ENCODE measurements at regions of chr1 and their contacts with region 1.

Region 1: GRCh38 chr1:6393400-6394187 is at the start of gene ACOT7:
- DNase-seq: peak; percentile 87 to 94
- ATAC-seq: peak; percentile 88 to 97 (median 90)
- H3K4me3 ChIP-seq: peak within 1 kb of the TSS; percentile 55
- H3K4me3 Mint-ChIP-seq: peak within 1 kb of the TSS; percentile 89
- H3K27ac ChIP-seq: peak within 1 kb of the TSS; percentile 90
- H3K27ac Mint-ChIP-seq: peak within 1 kb of the TSS; percentile 88
- H3K4me1 ChIP-seq: peaks cover 24% of the 10 kb centered on the region
- H3K4me1 Mint-ChIP-seq: peaks cover 21 to 23% of the 10 kb centered on the region in 2 donors
- H3K27me3 ChIP-seq: no peaks in the 10 kb centered on the region
- H3K27me3 Mint-ChIP-seq: no peaks in the 10 kb centered on the region
- CTCF ChIP-seq: no peak
- total RNA-seq, gene ACOT7: 11.5 to 16.9 (median 15.4) TPM

Region 2: GRCh38 chr1:6365047-6365446 is 28.5 kb before region 1 on chr1:
- intact Hi-C with region 1: loop called (anchors 2 kb)
- DNase-seq: peak in 1 of 2 donors; percentile 82
- ATAC-seq: peak; percentile 75 to 97 (median 93)
- H3K4me3 ChIP-seq: no peak overlapping the region
- H3K4me3 Mint-ChIP-seq: peak overlapping the region; percentile 65
- H3K27ac ChIP-seq: peak overlapping the region; percentile 28
- H3K27ac Mint-ChIP-seq: peak overlapping the region; percentile 73 to 79
- H3K4me1 ChIP-seq: peaks cover 33% of the 10 kb centered on the region
- H3K4me1 Mint-ChIP-seq: peaks cover 18 to 26% of the 10 kb centered on the region in 2 donors
- H3K27me3 ChIP-seq: no peaks in the 10 kb centered on the region
- H3K27me3 Mint-ChIP-seq: no peaks in the 10 kb centered on the region
- CTCF ChIP-seq: no peak

Region 3: DNA sequence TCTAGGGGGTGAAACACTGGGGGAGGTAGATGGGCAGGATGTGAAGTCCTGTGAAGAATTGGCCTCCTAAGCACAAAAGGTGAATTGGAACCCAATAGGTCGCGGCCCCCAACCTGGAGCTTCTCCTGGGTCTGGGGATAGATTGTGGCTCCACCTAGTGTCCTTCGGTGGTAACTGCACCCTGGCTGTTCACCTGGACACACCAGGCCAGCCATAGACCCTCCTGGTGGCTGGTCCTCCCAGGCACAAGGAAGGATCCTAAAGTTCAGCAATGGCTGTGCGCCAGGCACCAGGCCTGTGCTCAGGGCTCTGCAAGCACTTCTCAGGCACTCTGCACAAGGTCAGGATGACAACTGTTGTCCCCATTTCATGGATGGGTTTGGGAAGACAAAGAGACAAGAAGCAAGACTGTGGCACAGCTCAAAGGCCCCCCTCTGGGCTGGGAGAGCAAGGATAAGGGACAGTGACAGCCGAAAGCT is 44.5 kb after region 1 on chr1:
- intact Hi-C with region 1: no loop called
- DNase-seq: peak; percentile 64 to 86
- ATAC-seq: peak; percentile 59 to 72 (median 64)
- H3K4me3 ChIP-seq: no peak overlapping the region
- H3K4me3 Mint-ChIP-seq: peak overlapping the region; percentile 73
- H3K27ac ChIP-seq: no peak overlapping the region
- H3K27ac Mint-ChIP-seq: no peak overlapping the region
- H3K4me1 ChIP-seq: peaks cover 8% of the 10 kb centered on the region
- H3K4me1 Mint-ChIP-seq: peaks cover 5 to 19% of the 10 kb centered on the region in 2 donors
- H3K27me3 ChIP-seq: peaks cover 10% of the 10 kb centered on the region
- H3K27me3 Mint-ChIP-seq: peaks cover 20 to 32% of the 10 kb centered on the region in 2 donors
- CTCF ChIP-seq: peak; percentile 90

Measured in natural killer cell (primary cell).